Caco-2 (cell line): ENCODE measurements at regions of chr11 and their contacts with region 1.

Region 1: DNA sequence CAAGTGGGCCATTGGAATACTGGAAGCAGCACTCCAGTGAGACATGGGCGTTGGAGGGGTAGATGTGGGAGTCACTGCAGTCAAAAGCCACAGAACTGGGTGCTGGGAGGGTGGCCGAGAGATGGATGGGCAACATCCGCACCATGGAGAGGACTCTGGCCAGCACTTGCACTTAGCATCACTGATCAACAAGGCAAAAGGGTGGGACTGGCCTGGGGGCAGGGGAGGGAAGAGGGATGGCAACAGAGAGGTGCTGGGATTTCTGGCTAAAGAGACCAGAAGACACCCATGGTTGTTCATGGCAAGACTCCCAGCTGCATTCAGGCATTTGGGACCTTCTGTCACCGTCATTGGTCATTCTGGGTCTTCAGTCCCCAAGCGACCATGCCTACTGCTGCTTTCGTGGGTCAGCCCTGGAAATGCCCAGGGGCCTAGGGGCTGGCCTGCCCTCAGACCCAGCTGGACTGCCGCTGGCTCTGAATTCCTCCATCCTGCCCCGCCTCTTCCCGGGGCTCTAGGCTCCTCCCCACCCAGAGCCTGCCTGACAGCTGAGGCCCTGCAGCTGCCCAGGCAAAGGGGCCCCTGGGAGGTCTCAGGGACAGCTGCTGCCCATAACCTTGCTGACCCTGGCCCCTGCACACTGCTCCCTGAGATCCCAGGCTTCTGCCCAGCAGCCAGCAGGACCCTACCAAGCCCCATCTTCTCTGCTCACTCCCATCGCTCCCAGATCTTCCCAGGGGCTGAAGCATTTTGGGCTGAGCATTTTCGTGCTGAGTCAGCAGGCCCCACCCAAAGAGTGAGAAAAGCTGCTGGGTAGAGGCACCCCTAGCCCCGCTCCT is 13.0 kb upstream of the CDC42EP2 start:
- DNase-seq: peak; percentile 73 to 77
- H3K4me3 ChIP-seq: no peak overlapping the region
- H3K4me3 Mint-ChIP-seq: peak overlapping the region; percentile 44
- H3K27ac Mint-ChIP-seq: peak overlapping the region; percentile 89
- H3K4me1 ChIP-seq: peaks cover 55% of the 10 kb centered on the region
- H3K4me1 Mint-ChIP-seq: peaks cover 29% of the 10 kb centered on the region
- H3K27me3 ChIP-seq: no peaks in the 10 kb centered on the region
- H3K27me3 Mint-ChIP-seq: no peaks in the 10 kb centered on the region
- CTCF ChIP-seq: no peak

Region 2: GRCh38 chr11:65290448-65291165 is 11.1 kb before region 1 on chr11:
- CTCF ChIA-PET with region 1: interaction called, 4 read pairs
- POLR2A ChIA-PET with region 1: interaction called, 7 read pairs
- intact Hi-C with region 1: loop called (anchors 1 kb)
- DNase-seq: no peak
- H3K4me3 ChIP-seq: no peak overlapping the region
- H3K4me3 Mint-ChIP-seq: peak overlapping the region; percentile 83
- H3K27ac Mint-ChIP-seq: peak overlapping the region; percentile 97
- H3K4me1 ChIP-seq: peaks cover 47% of the 10 kb centered on the region
- H3K4me1 Mint-ChIP-seq: peaks cover 46% of the 10 kb centered on the region
- H3K27me3 ChIP-seq: no peaks in the 10 kb centered on the region
- H3K27me3 Mint-ChIP-seq: no peaks in the 10 kb centered on the region
- CTCF ChIP-seq: no peak